ENCODE measurements at regions of chr18 and their contacts with region 1.

Region 1: DNA sequence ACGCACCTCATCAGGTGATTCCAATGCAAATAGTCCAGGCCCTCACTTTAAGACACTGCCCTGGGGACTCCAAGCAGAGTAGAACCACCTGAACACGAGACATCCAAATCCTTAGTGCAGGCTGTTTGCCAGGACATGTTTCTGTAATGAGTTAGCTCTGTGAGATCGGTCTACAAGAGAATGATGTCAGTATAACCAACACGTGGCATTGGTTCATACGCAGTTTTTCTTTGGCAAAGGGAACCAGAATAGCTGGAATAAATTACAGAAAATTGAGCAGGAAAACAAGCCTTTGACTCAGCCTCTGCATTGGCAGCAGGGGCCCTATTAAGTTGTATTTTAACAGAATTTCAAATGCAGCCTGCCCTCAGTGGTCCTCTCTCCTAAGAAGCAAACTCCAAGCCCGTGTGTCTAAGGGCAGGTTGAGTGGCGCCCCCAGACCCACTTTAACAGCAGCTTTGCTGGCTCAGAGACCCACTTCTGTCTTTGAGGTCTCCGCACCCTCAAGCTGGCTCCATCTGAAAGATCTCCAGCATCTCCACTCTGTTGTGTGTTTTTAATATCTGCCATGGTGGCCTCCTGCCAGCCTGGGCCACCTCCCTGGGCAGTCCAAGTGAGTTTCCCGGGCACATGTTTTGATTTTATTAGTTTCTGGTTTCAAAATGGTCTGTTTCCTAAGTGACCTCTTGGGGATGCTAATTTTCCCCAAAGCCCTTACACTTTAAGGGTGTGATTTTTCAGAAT is 61.3 kb downstream of the ALPK2 start:
- DNase-seq: no peak
- ATAC-seq: no peak
- H3K4me3 ChIP-seq: no peak overlapping the region
- H3K4me3 Mint-ChIP-seq: no peak overlapping the region
- H3K27ac ChIP-seq: no peak overlapping the region
- H3K27ac Mint-ChIP-seq: no peak overlapping the region
- H3K4me1 ChIP-seq: peaks cover 8 to 9% of the 10 kb centered on the region in 2 donors
- H3K4me1 Mint-ChIP-seq: peaks cover 25% of the 10 kb centered on the region
- H3K27me3 ChIP-seq: no peaks in the 10 kb centered on the region
- H3K27me3 Mint-ChIP-seq: no peaks in the 10 kb centered on the region
- CTCF ChIP-seq: no peak

Region 2: DNA sequence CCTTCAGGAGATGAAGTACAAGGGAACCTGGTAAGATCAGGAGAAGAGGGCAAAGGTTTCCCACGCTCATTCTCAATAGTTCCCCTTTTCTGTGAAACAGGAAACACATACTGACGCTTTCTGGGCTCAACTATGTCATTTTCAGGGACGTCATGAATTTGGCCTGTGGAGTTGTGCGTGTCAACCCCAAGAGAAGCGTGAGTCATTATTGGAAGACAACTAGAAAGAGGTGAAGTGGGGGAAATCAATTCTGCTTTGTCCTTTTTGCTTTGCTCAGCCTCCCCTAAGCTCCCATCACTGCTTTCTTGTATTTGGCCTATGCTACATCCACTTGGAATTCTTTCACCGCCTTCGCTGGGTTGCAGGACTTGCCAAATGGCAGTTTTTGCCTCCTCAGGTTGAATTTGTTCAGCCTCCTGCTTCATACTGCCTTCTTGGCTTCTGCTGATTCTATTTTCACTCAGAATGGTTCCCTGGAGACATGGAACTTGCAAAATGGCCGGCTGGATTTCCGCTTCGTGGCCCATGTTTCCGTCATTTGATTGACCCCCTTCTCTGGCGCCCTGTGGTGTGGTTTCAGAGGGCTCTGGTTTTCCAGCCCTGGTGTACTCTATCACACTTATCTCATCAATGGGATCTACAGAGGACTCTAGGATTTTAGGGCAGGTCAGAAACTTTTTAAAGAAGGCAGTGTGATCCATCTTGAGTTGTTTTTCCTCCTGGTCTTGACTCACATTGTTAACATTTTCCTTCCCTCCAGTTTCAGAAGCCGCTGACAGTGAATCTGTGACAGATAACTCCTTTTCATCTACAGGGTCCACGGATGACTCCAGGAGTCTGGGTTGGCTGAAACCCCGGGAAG is 32.1 kb before region 1 on chr18:
- CTCF ChIA-PET with region 1: interaction called, 10 read pairs
- POLR2A ChIA-PET with region 1: interaction called, 3 read pairs
- intact Hi-C with region 1: loop called (anchors 1 kb)
- DNase-seq: peak; percentile 90
- ATAC-seq: peak; percentile 73
- H3K4me3 ChIP-seq: peak overlapping the region in 1 of 5 experiments; percentile 11
- H3K4me3 Mint-ChIP-seq: peak overlapping the region; percentile 82
- H3K27ac ChIP-seq: peak overlapping the region in 1 of 2 donors; percentile 57
- H3K27ac Mint-ChIP-seq: peak overlapping the region; percentile 77
- H3K4me1 ChIP-seq: peaks cover 47% of the 10 kb centered on the region in 2 donors
- H3K4me1 Mint-ChIP-seq: peaks cover 62% of the 10 kb centered on the region
- H3K27me3 ChIP-seq: no peaks in the 10 kb centered on the region
- H3K27me3 Mint-ChIP-seq: no peaks in the 10 kb centered on the region
- CTCF ChIP-seq: no peak

Region 3: DNA sequence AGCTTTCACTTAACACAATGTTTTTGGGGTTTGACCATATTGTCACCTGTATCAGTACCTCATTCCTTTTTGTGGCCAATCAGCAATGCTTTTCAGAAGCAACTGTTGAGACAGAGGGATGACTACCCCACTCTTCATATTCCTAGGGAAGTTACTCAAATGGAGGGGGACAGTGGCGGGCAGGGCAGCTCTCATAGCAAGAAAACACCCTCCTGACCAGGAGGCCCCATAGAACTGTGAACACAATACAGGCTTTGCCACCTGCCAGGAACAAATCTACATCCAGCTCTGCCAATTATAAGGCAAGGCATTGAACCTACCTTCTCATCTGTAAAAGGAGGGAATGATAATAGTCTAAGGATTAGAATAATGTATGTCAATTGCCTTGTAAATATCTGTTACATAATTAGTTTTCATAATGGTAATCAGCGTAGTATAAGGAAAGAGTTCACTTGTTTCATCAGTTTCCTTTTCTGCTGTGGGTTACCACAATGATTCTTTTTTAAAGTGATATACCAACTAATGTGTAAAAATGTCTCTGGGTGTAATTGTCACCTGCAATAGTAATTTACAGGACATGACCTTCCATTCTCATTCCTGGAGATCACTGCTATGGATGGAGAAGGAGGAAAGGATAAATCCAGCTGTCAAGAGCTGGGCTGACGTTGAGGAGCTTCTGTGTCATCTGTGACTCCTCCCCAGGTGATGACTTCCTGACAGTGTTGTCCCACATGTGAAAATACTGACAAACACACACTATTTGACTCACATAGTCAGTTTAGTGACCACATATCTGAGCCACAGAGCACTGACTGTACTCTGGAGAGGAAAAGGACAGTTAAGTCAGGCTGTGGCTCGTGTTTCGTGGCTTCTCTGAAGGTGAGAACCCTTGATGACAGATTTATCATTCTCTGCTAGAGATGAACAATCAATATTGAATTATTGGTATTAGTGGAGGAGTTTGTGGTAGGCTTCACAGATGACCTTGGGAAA is 47.8 kb after region 1 on chr18:
- CTCF ChIA-PET with region 1: no interaction called
- POLR2A ChIA-PET with region 1: no interaction called
- intact Hi-C with region 1: no loop called
- DNase-seq: peak; percentile 24
- ATAC-seq: peak; percentile 17
- H3K4me3 ChIP-seq: no peak overlapping the region
- H3K4me3 Mint-ChIP-seq: peak overlapping the region; percentile 72
- H3K27ac ChIP-seq: peak overlapping the region in 1 of 2 donors; percentile 36
- H3K27ac Mint-ChIP-seq: no peak overlapping the region
- H3K4me1 ChIP-seq: peaks cover 26 to 27% of the 10 kb centered on the region in 2 donors
- H3K4me1 Mint-ChIP-seq: peaks cover 34% of the 10 kb centered on the region
- H3K27me3 ChIP-seq: no peaks in the 10 kb centered on the region
- H3K27me3 Mint-ChIP-seq: no peaks in the 10 kb centered on the region
- CTCF ChIP-seq: no peak